Aorta (tissue), 5 donors: ENCODE measurements at regions of chr1 and their contacts with region 1.

Region 1: DNA sequence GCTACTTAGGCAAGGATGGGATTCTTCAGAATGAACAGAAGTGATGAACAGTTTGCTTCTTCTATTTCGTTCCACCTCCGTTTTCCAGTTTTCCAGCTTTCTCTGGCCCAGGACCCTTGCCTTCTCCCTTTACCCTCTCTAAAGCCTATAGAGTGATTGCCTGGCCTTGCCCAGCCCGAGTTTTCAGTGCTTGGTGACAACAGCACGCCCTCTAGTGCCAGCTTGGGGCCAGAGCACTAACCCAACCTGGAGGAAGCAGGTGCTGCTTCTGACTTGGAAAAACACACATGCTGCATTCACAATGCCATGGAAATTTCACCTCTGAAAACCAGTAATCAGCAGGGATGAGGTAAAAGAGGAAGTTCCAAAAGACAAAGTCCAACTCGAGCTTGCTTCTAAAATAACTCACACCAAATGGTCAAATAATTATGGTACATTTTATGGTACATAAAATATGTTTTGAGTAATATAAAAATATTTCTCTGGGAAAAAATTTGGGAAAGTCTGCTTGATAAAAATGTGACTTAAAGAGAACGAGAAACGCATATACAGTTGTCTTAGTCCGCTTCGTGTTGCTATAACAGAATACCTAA is 26.1 kb downstream of the UBE2T start:
- DNase-seq: peak; percentile 87 to 90
- ATAC-seq: peak; percentile 71
- H3K4me3 ChIP-seq: no peak overlapping the region
- H3K27ac ChIP-seq: no peak overlapping the region
- H3K4me1 ChIP-seq: no peaks in the 10 kb centered on the region
- H3K27me3 ChIP-seq: no peaks in the 10 kb centered on the region

Region 2: GRCh38 chr1:202144402-202145067 is 171.1 kb before region 1 on chr1 and contains the start of gene ARL8A:
- intact Hi-C with region 1: no loop called
- DNase-seq: peak; percentile 84 to 92
- ATAC-seq: peak; percentile 84
- H3K4me3 ChIP-seq: peak within 1 kb of the TSS; percentile 93 to 100
- H3K27ac ChIP-seq: peak within 1 kb of the TSS; percentile 38 to 84
- H3K4me1 ChIP-seq: no peaks in the 10 kb centered on the region
- H3K27me3 ChIP-seq: no peaks in the 10 kb centered on the region
- total RNA-seq, gene ARL8A: 66.3 to 87.7 TPM

Region 3: GRCh38 chr1:202184750-202185460 is 130.8 kb before region 1 on chr1:
- intact Hi-C with region 1: loop called in 1 of 2 experiments (anchors 2 kb)
- DNase-seq: peak; percentile 89 to 95
- ATAC-seq: peak; percentile 71
- H3K4me3 ChIP-seq: no peak overlapping the region
- H3K27ac ChIP-seq: no peak overlapping the region
- H3K4me1 ChIP-seq: no peaks in the 10 kb centered on the region
- H3K27me3 ChIP-seq: no peaks in the 10 kb centered on the region

Region 4: GRCh38 chr1:202192770-202193613 is 122.7 kb before region 1 on chr1:
- intact Hi-C with region 1: loop called (anchors 2 kb)
- DNase-seq: peak; percentile 67 to 90
- ATAC-seq: peak; percentile 79
- H3K4me3 ChIP-seq: peak overlapping the region; percentile 64 to 89
- H3K27ac ChIP-seq: peak overlapping the region in 1 of 2 donors; percentile 84
- H3K4me1 ChIP-seq: no peaks in the 10 kb centered on the region
- H3K27me3 ChIP-seq: no peaks in the 10 kb centered on the region

Region 5: GRCh38 chr1:202270871-202271326 is 44.8 kb before region 1 on chr1:
- intact Hi-C with region 1: no loop called
- DNase-seq: no peak
- ATAC-seq: no peak
- H3K4me3 ChIP-seq: no peak overlapping the region
- H3K27ac ChIP-seq: peak overlapping the region in 1 of 2 donors; percentile 6
- H3K4me1 ChIP-seq: peaks cover 3 to 8% of the 10 kb centered on the region in 2 donors
- H3K27me3 ChIP-seq: no peaks in the 10 kb centered on the region

Region 6: GRCh38 chr1:202329891-202330290 is 14.2 kb after region 1 on chr1:
- intact Hi-C with region 1: no loop called
- DNase-seq: no peak
- ATAC-seq: no peak
- H3K4me3 ChIP-seq: no peak overlapping the region
- H3K27ac ChIP-seq: peak overlapping the region in 1 of 2 donors; percentile 17
- H3K4me1 ChIP-seq: no peaks in the 10 kb centered on the region
- H3K27me3 ChIP-seq: no peaks in the 10 kb centered on the region

Region 7: GRCh38 chr1:202362212-202362611 is 46.5 kb after region 1 on chr1:
- intact Hi-C with region 1: no loop called
- DNase-seq: no peak
- ATAC-seq: no peak
- H3K4me3 ChIP-seq: no peak overlapping the region
- H3K27ac ChIP-seq: no peak overlapping the region
- H3K4me1 ChIP-seq: no peaks in the 10 kb centered on the region
- H3K27me3 ChIP-seq: no peaks in the 10 kb centered on the region